Prostate gland (tissue), 2 donors: ENCODE measurements at regions of chr2 and their contacts with region 1.

Region 1: GRCh38 chr2:147937744-147938349 is 82.7 kb downstream of the ORC4 start:
- DNase-seq: no peak
- H3K4me3 ChIP-seq: no peak overlapping the region
- H3K27ac ChIP-seq: no peak overlapping the region
- H3K4me1 ChIP-seq: no peaks in the 10 kb centered on the region
- H3K27me3 ChIP-seq: no peaks in the 10 kb centered on the region
- CTCF ChIP-seq: peak; percentile 44 to 82 (median 78)
- POLR2A ChIP-seq: no peak

Region 2: GRCh38 chr2:148519013-148519412 is 581.2 kb after region 1 on chr2:
- intact Hi-C with region 1: loop called (anchors 10 kb)
- DNase-seq: no peak
- H3K4me3 ChIP-seq: no peak overlapping the region
- H3K27ac ChIP-seq: no peak overlapping the region
- H3K4me1 ChIP-seq: no peaks in the 10 kb centered on the region
- H3K27me3 ChIP-seq: no peaks in the 10 kb centered on the region
- CTCF ChIP-seq: no peak
- POLR2A ChIP-seq: no peak